GM23248 (cell line): ENCODE measurements at regions of chr4 and their contacts with region 1.

Region 1: DNA sequence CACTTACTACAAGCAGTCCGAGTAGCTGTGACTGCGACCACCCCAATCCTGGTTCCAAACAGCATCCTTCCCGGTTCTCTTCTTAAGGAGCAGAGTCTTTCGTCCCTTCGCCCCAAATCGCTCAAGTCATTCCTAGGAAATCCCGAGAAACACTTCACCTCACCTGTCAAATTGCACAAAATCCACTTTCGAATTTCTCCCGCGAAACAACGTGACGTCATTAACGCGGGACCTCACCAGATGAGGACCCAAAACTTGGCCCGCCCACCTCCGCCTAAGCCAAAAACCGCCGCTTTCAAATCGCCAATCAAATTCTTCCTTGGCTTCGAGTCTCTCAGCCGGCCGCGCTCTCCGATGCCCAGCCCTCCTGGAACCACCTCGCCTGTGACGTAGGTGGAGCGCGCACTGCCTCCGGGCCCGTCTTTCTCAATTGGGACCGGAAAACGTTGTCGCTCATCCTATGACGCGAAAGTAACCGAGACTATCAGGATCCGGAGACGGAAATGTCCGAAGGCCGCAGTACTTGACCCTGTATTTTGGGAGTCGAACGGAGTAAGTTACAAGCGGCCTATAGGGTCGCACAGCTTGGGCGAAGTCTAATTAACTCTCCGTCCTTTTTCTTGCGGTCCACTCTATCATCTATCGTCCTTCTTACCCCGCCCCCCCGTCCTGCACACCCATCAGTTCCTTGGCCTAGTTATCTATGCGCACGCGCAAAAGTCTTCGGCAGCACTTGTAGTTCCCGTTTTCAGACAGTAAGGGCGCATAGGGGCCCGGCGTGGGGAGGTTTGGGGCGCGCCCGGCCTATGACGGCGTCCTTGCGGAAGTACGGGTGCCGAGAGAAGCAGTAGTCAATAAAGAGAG is at the starts of genes LARP7 and ZGRF1:
- DNase-seq: peak; percentile 99
- H3K4me3 ChIP-seq: peak within 1 kb of the TSS; percentile 97
- H3K27ac ChIP-seq: peak within 1 kb of the TSS; percentile 93
- H3K4me1 ChIP-seq: peaks cover 17% of the 10 kb centered on the region
- H3K27me3 ChIP-seq: no peaks in the 10 kb centered on the region
- total RNA-seq, gene LARP7: 22.8 and 28.3 TPM in 2 replicates
- total RNA-seq, gene ZGRF1: 4.8 and 5.3 TPM in 2 replicates

Region 2: DNA sequence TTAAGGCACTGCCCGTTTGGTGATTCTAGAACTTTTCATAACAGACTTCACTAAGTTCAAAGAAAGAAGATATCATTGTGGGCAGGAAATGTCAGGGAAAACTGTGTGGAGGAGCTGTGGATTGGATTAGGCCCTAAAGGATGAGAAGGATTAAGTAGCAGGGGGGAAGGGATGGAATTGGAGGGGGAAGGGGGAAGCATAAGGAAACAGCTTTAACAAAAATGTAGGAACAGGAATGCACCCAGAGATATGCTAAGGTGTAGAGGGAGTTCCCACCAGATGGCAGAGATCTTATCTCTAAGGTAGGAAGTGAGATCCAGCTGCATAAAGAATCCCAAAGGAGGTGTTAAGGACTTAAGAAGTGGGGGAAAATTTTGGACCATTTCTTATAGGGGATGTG is 114.5 kb after region 1 on chr4:
- in situ Hi-C with region 1: loop called (anchors 10 kb)
- DNase-seq: no peak
- H3K4me3 ChIP-seq: no peak overlapping the region
- H3K27ac ChIP-seq: no peak overlapping the region
- H3K4me1 ChIP-seq: no peaks in the 10 kb centered on the region
- H3K27me3 ChIP-seq: no peaks in the 10 kb centered on the region